PC-9 (cell line): ENCODE measurements at regions of chr11 and their contacts with region 1.

Region 1: GRCh38 chr11:84780689-84781293 is 846.4 kb downstream of the DLG2 start:
- DNase-seq: peak in 1 of 2 experiments; percentile 44
- H3K4me3 ChIP-seq: no peak overlapping the region
- H3K27ac ChIP-seq: no peak overlapping the region
- H3K4me1 ChIP-seq: no peaks in the 10 kb centered on the region
- H3K27me3 ChIP-seq: no peaks in the 10 kb centered on the region
- CTCF ChIP-seq: peak; percentile 76

Region 2: DNA sequence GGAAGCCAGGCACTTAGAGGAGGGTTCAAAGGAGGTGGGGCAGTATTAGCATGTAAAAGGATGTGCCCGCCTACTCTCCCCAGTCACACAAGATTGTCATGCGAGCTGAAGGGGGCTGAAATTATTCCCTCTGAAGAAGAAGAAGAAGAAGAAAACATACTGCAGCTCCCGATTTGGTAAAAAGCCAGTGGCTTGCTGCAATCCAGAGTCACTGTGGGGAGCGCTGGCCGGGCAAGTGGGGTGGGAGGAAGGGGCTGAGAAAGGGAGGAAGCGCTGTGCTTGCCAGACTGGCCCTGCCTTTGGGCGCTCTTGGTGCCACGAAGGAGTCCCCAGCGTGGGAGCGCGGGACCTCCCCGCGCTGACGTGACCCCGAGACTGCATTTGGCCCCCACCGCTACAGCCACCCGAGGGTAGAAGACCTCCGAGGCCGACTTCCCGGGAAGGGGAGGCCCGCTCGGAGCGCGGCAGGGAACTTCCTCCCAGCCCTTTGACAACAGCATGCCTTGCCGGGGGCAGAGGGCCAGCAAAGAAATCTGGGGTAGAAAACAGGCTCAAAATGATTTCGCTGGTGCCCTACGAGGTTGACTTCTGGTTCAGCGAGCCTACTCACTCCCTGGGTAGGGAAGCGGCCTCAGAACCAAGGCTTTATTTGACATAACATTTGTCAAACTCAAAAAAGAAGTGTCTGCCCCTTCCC is 59.9 kb before region 1 on chr11:
- CTCF ChIA-PET with region 1: no interaction called
- POLR2A ChIA-PET with region 1: no interaction called
- intact Hi-C with region 1: no loop called
- DNase-seq: no peak
- H3K4me3 ChIP-seq: no peak overlapping the region
- H3K27ac ChIP-seq: no peak overlapping the region
- H3K4me1 ChIP-seq: no peaks in the 10 kb centered on the region
- H3K27me3 ChIP-seq: peaks cover 8% of the 10 kb centered on the region
- CTCF ChIP-seq: no peak

Region 3: DNA sequence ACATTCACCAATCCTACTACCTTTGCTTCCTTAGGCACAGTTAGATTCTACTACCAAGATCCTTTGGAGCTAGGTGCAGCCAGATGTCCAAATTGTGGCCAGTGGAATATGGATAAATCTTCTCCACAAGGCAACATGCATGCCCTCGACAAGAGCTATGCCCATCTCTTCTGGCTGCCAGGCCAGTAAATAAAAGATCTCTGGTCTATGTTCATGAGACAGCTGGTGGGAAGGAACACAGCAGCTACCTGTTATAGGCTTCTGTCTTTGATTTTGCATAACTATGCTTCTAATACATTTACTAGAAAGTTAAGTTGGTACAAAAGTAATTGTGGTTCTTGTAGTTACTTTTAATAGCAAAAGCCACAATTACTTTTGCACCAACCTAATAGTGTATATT is 663.7 kb after region 1 on chr11:
- CTCF ChIA-PET with region 1: no interaction called
- POLR2A ChIA-PET with region 1: no interaction called
- intact Hi-C with region 1: loop called (anchors 5 kb)
- DNase-seq: no peak
- H3K4me3 ChIP-seq: no peak overlapping the region
- H3K27ac ChIP-seq: no peak overlapping the region
- H3K4me1 ChIP-seq: no peaks in the 10 kb centered on the region
- H3K27me3 ChIP-seq: no peaks in the 10 kb centered on the region
- CTCF ChIP-seq: no peak

Region 4: GRCh38 chr11:85558411-85558810 is 777.6 kb after region 1 on chr11:
- CTCF ChIA-PET with region 1: no interaction called
- POLR2A ChIA-PET with region 1: interaction called, 10 read pairs
- intact Hi-C with region 1: no loop called
- DNase-seq: no peak
- H3K4me3 ChIP-seq: no peak overlapping the region
- H3K27ac ChIP-seq: no peak overlapping the region
- H3K4me1 ChIP-seq: no peaks in the 10 kb centered on the region
- H3K27me3 ChIP-seq: no peaks in the 10 kb centered on the region
- CTCF ChIP-seq: no peak